Activated B cell treated with CpG ODN at 0.5 μM for 24 hours (primary cell): ENCODE measurements at regions of chr9 and their contacts with region 1.

Region 1: DNA sequence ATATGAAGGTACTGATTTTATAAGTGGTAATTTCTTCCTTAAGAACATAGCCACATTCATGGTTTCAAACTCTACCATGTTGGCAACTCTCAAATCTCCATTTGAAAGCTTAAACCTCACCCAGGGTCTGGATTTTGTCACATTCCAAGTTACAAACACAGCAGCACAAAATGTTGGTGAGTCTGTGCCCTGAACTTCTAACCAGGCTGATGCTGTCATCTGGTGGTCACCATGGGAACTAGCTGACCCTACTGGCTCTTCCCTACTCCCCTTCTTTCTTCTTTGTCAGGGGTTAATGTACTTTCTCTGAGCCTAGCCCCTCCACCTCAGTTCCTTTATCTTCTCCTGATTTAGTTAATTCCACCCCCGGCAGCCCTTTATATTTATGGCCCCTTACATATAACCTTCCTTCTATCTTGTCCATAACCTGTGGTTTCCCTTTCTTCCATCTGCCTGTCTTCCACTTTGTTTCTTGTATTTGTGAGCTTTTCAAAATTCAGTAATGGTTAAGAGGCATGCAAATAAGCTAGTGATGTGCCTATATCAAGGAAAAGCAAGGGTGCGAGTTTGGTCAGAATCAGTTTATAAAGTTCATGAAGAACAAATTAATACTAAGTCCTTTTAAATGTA is 35.9 kb downstream of the TGFBR1 start:
- DNase-seq: no peak
- ATAC-seq: peak; percentile 86
- H3K4me3 Mint-ChIP-seq: no peak overlapping the region
- H3K27ac Mint-ChIP-seq: peak overlapping the region; percentile 9
- H3K4me1 Mint-ChIP-seq: peaks cover 27% of the 10 kb centered on the region
- H3K27me3 Mint-ChIP-seq: no peaks in the 10 kb centered on the region
- CTCF ChIP-seq: peak; percentile 24

Region 2: GRCh38 chr9:98974994-98975712 is 165.6 kb before region 1 on chr9:
- CTCF ChIA-PET with region 1: interaction called, 128 read pairs
- POLR2A ChIA-PET with region 1: no interaction called
- intact Hi-C with region 1: loop called (anchors 1 kb)
- DNase-seq: peak; percentile 80
- ATAC-seq: peak; percentile 98
- H3K4me3 Mint-ChIP-seq: peak overlapping the region; percentile 15
- H3K27ac Mint-ChIP-seq: no peak overlapping the region
- H3K4me1 Mint-ChIP-seq: peaks cover 5% of the 10 kb centered on the region
- H3K27me3 Mint-ChIP-seq: peaks cover 2% of the 10 kb centered on the region
- CTCF ChIP-seq: peak; percentile 89

Region 3: DNA sequence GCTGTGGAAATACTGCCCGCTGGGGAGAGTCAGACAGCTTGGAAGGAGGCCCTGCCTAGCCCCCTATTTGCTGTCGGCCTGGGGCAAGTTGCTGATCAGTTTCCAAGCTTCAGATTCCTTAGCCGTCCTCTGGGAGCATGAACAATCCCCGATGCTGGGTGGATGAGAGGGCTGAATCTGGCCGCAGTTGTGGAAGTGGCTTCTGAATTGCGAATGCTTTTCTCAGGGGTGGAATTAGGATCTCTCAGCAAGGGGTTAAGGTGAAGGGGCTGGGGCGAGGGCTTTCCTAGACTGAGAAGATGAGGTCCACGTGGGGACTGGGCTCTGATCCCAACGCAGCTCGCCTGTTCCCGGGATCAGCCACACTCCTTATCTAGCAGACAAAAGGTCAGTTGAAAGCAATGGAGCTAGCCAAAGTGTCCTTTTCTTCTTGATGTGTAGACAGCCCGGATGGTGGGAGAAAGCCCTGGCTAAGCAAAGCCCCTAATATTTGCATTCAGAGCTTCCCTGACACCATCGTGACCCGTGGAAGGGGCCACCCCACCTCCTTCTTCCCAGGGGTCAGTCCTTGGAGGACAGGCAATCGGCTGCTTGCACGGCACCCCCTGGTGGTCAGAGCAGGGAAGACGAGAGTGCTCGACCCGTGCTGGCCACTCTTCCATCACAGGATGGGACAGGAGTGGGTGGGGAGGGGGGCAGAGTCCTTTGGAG is 142.2 kb before region 1 on chr9:
- CTCF ChIA-PET with region 1: interaction called, 264 read pairs
- POLR2A ChIA-PET with region 1: interaction called, 4 read pairs
- intact Hi-C with region 1: loop called (anchors 1 kb)
- DNase-seq: peak; percentile 57
- ATAC-seq: peak; percentile 74
- H3K4me3 Mint-ChIP-seq: no peak overlapping the region
- H3K27ac Mint-ChIP-seq: no peak overlapping the region
- H3K4me1 Mint-ChIP-seq: peaks cover 21% of the 10 kb centered on the region
- H3K27me3 Mint-ChIP-seq: peaks cover 2% of the 10 kb centered on the region
- CTCF ChIP-seq: peak; percentile 67

Region 4: GRCh38 chr9:99057665-99058625 is 82.9 kb before region 1 on chr9:
- CTCF ChIA-PET with region 1: interaction called, 22 read pairs
- POLR2A ChIA-PET with region 1: interaction called, 6 read pairs
- intact Hi-C with region 1: no loop called
- DNase-seq: peak; percentile 36
- ATAC-seq: peak; percentile 51
- H3K4me3 Mint-ChIP-seq: peak overlapping the region; percentile 70
- H3K27ac Mint-ChIP-seq: peak overlapping the region; percentile 94
- H3K4me1 Mint-ChIP-seq: peaks cover 73% of the 10 kb centered on the region
- H3K27me3 Mint-ChIP-seq: no peaks in the 10 kb centered on the region
- CTCF ChIP-seq: no peak

Region 5: GRCh38 chr9:99130069-99130468 is 10.7 kb before region 1 on chr9:
- CTCF ChIA-PET with region 1: interaction called, 13 read pairs
- POLR2A ChIA-PET with region 1: interaction called, 5 read pairs
- intact Hi-C with region 1: no loop called
- DNase-seq: no peak
- ATAC-seq: peak; percentile 94
- H3K4me3 Mint-ChIP-seq: peak overlapping the region; percentile 17
- H3K27ac Mint-ChIP-seq: peak overlapping the region; percentile 77
- H3K4me1 Mint-ChIP-seq: peaks cover 73% of the 10 kb centered on the region
- H3K27me3 Mint-ChIP-seq: no peaks in the 10 kb centered on the region
- CTCF ChIP-seq: no peak

Region 6: DNA sequence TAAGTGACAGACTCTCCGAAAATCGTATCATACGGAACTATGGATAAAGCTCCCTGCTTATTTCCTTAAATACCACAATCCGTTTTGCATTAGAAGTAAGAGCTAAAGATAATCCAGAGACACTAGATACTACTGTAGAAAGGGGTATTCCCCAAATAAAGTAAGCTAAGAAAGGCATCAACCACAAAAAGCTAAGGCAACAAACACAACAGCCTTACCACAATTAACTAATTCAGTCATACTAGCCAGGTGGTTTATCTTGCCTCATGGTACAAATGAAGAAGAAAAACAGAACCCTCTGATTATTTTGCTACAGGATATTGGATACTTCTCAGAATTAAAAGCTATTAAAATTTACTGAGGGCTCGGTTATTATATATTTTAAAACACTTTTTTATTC is 943.9 kb after region 1 on chr9:
- CTCF ChIA-PET with region 1: no interaction called
- POLR2A ChIA-PET with region 1: no interaction called
- intact Hi-C with region 1: no loop called
- DNase-seq: no peak
- ATAC-seq: peak; percentile 65
- H3K4me3 Mint-ChIP-seq: peak overlapping the region; percentile 78
- H3K27ac Mint-ChIP-seq: peak overlapping the region; percentile 94
- H3K4me1 Mint-ChIP-seq: peaks cover 87% of the 10 kb centered on the region
- H3K27me3 Mint-ChIP-seq: no peaks in the 10 kb centered on the region
- CTCF ChIP-seq: no peak